ENCODE measurements at regions of chr15 and their contacts with region 1.

Region 1: DNA sequence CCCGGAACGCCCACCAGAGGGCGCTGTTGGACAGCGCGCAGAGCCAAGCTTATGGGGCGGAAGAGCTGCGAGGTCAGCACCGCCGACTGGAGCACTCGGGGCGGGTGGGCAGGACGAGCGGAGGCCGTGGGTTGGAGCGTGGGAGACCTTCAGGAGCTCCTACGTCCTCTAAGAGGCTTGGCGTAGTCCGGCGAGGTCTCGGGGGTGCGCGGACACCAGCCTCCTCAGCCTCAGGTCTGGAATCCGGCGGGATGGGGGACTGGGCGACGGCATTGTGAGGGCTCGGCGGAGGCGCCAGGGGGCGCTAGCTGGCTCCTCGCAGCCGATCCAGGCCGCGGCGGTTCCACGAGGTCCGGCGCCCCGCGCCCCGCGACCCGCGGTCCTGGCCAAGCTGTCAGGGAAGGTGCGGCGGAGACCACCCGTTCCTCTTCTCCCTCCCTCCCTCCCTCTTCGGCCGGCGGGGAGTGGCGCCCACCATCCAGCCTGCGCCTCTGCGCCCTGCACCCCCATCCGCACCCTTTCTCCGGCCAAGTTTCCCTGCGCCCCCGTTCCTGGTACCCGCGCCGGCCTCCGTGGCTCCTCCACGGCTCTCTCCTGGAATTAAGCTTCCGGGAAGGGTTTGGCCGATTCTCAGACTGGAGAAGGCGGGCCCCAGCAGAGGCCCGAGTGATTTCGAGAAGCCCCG is 24.3 kb upstream of the POLG start:
- DNase-seq: peak; percentile 94
- H3K4me3 ChIP-seq: peak overlapping the region; percentile 54 to 81
- H3K27ac ChIP-seq: peak overlapping the region in 1 of 2 experiments; percentile 77; a peak in 1 of 4 replicates
- H3K4me1 ChIP-seq: peaks cover 0 to 35% of the 10 kb centered on the region in 2 experiments; a peak in 2 of 4 replicates
- H3K27me3 ChIP-seq: peaks cover 39% of the 10 kb centered on the region; the same call in 1 of the 2 replicates
- CTCF ChIP-seq: peak; percentile 92
- EP300 ChIP-seq: no peak
- RAD21 ChIP-seq: peak; percentile 87

Region 2: GRCh38 chr15:89321521-89322410 is 37.1 kb before region 1 on chr15:
- CTCF ChIA-PET with region 1: interaction called, 30 read pairs
- POLR2A ChIA-PET with region 1: no interaction called
- DNase-seq: peak; percentile 50
- H3K4me3 ChIP-seq: no peak overlapping the region
- H3K27ac ChIP-seq: no peak overlapping the region
- H3K4me1 ChIP-seq: no peaks in the 10 kb centered on the region
- H3K27me3 ChIP-seq: no peaks in the 10 kb centered on the region
- CTCF ChIP-seq: no peak
- EP300 ChIP-seq: no peak
- RAD21 ChIP-seq: no peak

Region 3: DNA sequence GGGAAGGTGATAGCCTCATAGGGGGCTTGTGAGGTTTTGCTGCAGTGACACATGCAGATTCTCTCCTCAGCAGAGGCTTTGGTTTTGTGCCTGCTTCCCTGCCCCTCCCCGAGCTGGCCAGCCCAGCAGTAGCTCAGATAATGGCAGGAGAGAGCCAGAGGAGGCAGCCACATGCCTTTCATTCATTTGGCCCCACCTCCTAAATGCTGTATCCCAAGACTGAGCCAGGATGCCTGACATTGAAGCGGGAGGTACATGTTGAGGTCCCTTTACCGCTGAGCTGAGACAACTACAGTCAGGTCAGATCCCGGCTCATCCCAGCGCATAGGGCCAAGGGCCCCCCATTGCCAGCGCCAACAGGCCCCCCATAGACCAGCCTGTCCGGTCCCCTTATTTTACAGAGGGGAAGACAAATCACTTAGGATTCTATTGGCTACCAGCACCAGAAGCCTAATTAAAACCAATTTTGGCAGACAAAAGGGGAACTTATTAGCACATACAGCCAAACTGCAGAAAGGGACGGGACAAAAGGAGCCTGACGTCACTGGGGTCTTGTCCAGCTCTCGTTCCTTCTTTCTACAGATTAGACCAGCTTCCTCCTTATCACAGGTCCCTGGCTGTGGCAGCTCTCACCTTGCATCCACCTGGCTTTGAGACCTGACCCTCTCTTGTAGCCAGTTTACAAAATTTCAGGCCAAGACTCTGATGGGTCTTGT is 12.2 kb before region 1 on chr15:
- CTCF ChIA-PET with region 1: interaction called, 95 read pairs
- POLR2A ChIA-PET with region 1: no interaction called
- DNase-seq: no peak
- H3K4me3 ChIP-seq: no peak overlapping the region
- H3K27ac ChIP-seq: no peak overlapping the region
- H3K4me1 ChIP-seq: no peaks in the 10 kb centered on the region; a peak in 1 of 4 replicates
- H3K27me3 ChIP-seq: no peaks in the 10 kb centered on the region
- CTCF ChIP-seq: no peak
- EP300 ChIP-seq: no peak
- RAD21 ChIP-seq: no peak

Region 4: DNA sequence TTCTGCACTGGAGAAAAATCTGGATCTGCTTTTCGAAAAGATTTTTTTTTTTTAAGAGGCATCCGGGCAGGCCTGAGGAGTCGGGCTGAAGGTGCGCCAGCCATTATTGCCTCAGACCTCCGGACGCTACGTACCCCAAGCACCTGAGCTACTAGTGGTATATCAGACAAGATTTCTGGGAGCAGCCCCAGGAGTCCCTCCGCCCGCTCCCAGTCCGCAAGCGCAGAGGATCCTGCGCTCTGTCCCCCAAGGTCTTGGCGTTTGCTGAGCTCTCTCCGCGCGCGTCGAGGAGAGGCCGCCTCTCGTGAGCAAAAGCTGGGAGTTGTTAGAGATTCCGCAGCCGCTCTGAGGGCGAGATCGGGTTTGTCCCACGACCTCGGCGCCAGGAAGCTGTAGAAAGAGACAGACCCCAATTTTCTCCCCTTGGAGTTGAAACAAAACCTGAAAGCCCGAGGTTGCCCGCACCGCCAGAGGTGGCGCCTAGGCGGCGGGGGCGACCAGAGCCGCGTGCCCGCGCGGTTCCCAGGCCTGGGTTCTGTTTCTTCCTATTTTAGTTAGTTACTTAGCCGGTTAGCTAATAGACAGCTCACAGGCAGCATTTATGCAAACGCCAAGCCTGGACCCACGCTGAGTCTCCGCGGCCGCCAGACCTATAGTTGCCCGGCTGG is 48.2 kb after region 1 on chr15:
- CTCF ChIA-PET with region 1: interaction called, 766 read pairs
- POLR2A ChIA-PET with region 1: interaction called, 8 read pairs
- DNase-seq: no peak
- H3K4me3 ChIP-seq: no peak overlapping the region
- H3K27ac ChIP-seq: no peak overlapping the region
- H3K4me1 ChIP-seq: no peaks in the 10 kb centered on the region; a peak in 1 of 4 replicates
- H3K27me3 ChIP-seq: no peaks in the 10 kb centered on the region
- CTCF ChIP-seq: no peak
- EP300 ChIP-seq: no peak
- RAD21 ChIP-seq: no peak

Region 5: GRCh38 chr15:89448825-89449224 is 89.9 kb after region 1 on chr15:
- CTCF ChIA-PET with region 1: interaction called, 446 read pairs
- POLR2A ChIA-PET with region 1: interaction called, 3 read pairs
- DNase-seq: peak; percentile 90
- H3K4me3 ChIP-seq: no peak overlapping the region
- H3K27ac ChIP-seq: peak overlapping the region in 1 of 2 experiments; percentile 86; a peak in 2 of 4 replicates
- H3K4me1 ChIP-seq: peaks cover 9 to 72% of the 10 kb centered on the region in 2 experiments; a peak in 3 of 4 replicates
- H3K27me3 ChIP-seq: no peaks in the 10 kb centered on the region
- CTCF ChIP-seq: no peak
- EP300 ChIP-seq: peak in 1 of 2 experiments; percentile 89; a peak in 2 of 4 replicates
- RAD21 ChIP-seq: no peak

Region 6: DNA sequence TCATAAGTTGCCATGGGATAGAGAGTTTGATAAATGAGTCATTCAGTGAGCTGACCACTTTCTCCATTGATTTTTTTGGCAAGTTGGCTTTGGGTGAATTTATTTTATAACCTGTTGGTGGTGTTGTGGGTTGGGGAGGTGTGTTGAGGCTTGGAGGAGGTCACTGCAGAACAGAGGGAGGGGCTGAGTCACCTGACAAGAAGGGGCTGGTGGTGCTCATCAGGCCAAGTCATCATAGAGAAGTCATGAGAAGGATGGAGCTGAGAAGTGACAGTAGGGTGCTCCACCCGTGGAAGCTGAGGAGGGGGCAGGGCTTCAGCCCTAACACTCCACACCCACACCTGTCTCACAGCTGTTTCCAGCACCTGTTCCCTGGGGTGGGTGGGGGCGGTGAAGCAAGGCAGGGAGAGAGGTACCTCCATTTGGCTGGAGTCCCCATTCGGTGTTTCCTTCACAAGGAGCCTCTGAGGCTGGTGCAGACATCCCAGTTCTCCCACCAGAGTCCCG is 127.0 kb after region 1 on chr15:
- CTCF ChIA-PET with region 1: interaction called, 305 read pairs
- POLR2A ChIA-PET with region 1: no interaction called
- DNase-seq: no peak
- H3K4me3 ChIP-seq: no peak overlapping the region
- H3K27ac ChIP-seq: no peak overlapping the region
- H3K4me1 ChIP-seq: peaks cover 0 to 2% of the 10 kb centered on the region in 2 experiments; a peak in 1 of 4 replicates
- H3K27me3 ChIP-seq: no peaks in the 10 kb centered on the region
- CTCF ChIP-seq: no peak
- EP300 ChIP-seq: no peak
- RAD21 ChIP-seq: no peak